ENCODE measurements at regions of chr12 and their contacts with region 1.

Region 1: DNA sequence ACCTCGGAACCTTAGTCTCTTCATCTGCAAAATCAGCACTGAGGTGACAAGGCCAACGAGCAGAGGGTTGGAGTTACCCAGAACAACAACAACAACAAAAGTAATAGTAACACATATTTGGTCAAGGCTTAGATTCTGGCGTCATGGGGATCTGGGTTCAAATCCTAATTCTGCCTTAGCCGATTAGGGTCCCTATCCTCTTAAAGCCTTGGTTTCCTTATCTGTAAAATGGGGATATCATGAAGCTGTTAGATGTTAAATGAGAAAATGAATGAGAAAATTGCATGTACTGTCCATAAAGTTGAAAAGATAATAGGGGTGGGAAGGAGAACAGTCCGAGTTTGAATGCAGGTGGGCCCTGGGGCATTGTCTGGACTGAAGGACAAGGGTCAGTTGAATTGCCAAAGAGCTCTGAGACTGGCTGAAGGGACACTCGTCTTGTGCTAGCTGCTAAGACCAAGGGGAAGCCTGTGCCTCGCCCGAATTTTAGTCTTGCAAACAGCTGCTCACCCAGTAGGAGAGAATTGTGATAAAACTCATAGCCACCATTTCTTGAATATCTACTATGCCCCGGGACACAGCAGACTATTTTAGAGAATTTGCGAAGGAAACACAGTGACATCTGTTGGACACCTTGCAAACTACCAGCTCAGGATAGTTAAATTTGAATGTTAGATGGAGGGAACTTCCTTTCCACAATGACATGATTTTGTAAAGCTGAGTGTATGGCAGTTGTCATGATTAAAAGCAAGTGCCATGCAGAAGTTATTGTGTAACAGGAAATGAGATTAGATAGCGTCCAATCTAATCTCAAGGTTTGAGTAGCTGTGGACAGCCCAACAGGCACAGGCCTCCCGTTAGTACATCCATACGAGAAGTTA is 6.8 kb upstream of the HNF1A start:
- DNase-seq: no peak
- H3K4me3 ChIP-seq: no peak overlapping the region
- H3K27ac ChIP-seq: no peak overlapping the region
- H3K4me1 ChIP-seq: peaks cover 0 to 10% (median 0%) of the 10 kb centered on the region in 4 donors
- H3K27me3 ChIP-seq: no peaks in the 10 kb centered on the region
- CTCF ChIP-seq: peak; percentile 63 to 74 (median 68)
- EP300 ChIP-seq: no peak
- POLR2A ChIP-seq: no peak

Region 2: DNA sequence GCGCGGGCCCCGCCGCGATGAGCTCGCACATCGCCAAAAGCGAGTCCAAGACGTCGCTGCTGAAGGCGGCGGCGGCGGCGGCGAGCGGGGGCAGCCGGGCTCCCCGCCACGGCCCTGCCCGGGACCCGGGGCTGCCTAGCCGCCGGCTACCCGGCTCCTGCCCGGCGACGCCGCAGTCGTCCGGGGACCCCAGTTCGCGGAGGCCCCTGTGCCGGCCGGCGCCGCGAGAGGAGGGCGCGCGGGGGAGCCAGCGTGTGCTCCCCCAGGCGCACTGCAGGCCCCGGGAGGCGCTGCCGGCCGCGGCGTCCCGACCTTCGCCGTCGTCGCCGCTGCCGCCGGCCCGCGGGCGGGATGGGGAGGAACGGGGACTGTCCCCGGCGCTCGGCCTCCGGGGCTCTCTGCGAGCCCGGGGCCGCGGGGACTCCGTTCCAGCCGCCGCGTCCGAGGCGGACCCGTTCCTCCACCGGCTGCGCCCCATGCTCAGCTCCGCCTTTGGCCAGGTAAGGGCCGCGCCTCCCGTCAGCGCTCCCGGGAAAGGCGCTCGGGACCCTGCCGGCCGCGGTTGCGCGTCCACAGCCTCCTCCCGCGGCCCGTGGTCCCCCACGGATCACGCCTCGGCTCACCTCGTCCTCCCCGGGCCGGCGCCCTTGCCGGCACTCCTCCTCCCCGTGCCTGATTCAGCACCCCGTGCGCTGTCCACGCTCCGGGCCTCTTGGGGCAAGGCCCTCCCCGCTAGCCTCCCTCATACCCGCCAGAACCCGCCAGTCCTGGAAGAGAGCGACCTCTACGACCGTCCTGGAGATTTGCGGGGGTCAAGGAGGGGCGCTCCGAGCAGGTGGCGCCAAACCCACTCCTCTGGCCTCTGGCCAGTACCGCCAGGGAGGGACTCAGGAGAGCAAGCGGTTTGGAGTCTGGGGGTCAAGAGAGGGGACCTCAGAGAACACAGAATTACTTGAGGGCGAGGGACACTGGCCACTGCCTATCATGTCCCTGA is 330.4 kb before region 1 on chr12:
- in situ Hi-C with region 1: loop called in 3 of 4 experiments (anchors 25 kb)
- intact Hi-C with region 1: loop called (anchors 5 kb)
- DNase-seq: peak; percentile 66
- H3K4me3 ChIP-seq: peak overlapping the region in 3 of 4 donors; percentile 40 to 72 (median 52)
- H3K27ac ChIP-seq: no peak overlapping the region
- H3K4me1 ChIP-seq: peaks cover 5 to 16% (median 14%) of the 10 kb centered on the region in 4 donors
- H3K27me3 ChIP-seq: peaks cover 66% of the 10 kb centered on the region
- CTCF ChIP-seq: no peak
- EP300 ChIP-seq: no peak
- POLR2A ChIP-seq: no peak

Region 3: GRCh38 chr12:120649442-120650232 is 321.9 kb before region 1 on chr12:
- in situ Hi-C with region 1: loop called in 3 of 4 experiments (anchors 25 kb)
- intact Hi-C with region 1: loop called (anchors 5 kb)
- DNase-seq: no peak
- H3K4me3 ChIP-seq: peak overlapping the region in 3 of 4 donors; percentile 7 to 39 (median 25)
- H3K27ac ChIP-seq: peak overlapping the region; percentile 26 to 67 (median 64)
- H3K4me1 ChIP-seq: peaks cover 0 to 21% (median 13%) of the 10 kb centered on the region in 4 donors
- H3K27me3 ChIP-seq: peaks cover 19% of the 10 kb centered on the region
- CTCF ChIP-seq: peak in 2 of 5 experiments; percentile 16 to 35
- EP300 ChIP-seq: no peak
- POLR2A ChIP-seq: no peak

Region 4: GRCh38 chr12:121026274-121027045 is 54.9 kb after region 1 on chr12:
- in situ Hi-C with region 1: no loop called
- intact Hi-C with region 1: no loop called
- DNase-seq: no peak
- H3K4me3 ChIP-seq: no peak overlapping the region
- H3K27ac ChIP-seq: peak overlapping the region; percentile 79 to 87 (median 83)
- H3K4me1 ChIP-seq: peaks cover 0 to 16% (median 10%) of the 10 kb centered on the region in 4 donors
- H3K27me3 ChIP-seq: no peaks in the 10 kb centered on the region
- CTCF ChIP-seq: peak in 3 of 5 experiments; percentile 18 to 62 (median 55)
- EP300 ChIP-seq: no peak
- POLR2A ChIP-seq: no peak